Activated naive CD4-positive, alpha-beta T cell treated with anti-CD3 and anti-CD28 coated beads for 36 hours (primary cell): ENCODE measurements at regions of chr6 and their contacts with region 1.

Region 1: DNA sequence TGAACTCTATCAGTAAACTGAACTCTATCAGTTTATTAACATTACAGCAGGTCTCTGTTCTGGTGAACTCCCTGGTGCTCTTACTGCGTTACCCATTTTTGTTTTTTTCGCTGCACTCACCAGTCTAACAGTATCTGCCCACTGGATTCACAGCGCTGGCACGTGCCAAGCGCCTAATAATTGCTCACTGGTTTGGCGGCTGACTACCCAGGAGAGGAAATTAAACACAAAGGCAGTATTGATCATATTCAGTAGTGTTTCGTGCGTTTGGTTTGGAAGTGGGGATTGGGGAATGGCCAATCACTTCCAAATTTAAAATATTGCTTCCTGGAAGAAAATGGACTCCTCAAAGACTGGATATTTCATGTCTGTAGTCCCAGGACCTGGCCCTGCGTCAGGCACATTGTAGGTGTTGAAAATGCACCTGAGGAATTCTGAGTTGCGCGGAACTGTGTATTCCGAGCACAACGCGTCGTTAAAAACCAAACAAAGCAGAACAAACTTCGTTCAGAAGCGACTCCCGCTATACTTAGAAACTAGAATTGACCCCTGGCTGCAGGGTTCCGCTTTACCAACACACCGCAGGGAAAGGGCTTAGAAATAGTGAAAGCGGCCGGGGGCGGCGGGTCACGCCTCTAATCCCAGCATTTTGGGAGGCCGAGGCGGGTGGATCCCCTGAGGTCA is 1.1 kb upstream of the RPS12 start:
- DNase-seq: peak; percentile 51
- H3K4me3 Mint-ChIP-seq: peak overlapping the region; percentile 94
- H3K27ac Mint-ChIP-seq: peak overlapping the region; percentile 97
- H3K4me1 Mint-ChIP-seq: peaks cover 27% of the 10 kb centered on the region
- H3K27me3 Mint-ChIP-seq: no peaks in the 10 kb centered on the region

Region 2: DNA sequence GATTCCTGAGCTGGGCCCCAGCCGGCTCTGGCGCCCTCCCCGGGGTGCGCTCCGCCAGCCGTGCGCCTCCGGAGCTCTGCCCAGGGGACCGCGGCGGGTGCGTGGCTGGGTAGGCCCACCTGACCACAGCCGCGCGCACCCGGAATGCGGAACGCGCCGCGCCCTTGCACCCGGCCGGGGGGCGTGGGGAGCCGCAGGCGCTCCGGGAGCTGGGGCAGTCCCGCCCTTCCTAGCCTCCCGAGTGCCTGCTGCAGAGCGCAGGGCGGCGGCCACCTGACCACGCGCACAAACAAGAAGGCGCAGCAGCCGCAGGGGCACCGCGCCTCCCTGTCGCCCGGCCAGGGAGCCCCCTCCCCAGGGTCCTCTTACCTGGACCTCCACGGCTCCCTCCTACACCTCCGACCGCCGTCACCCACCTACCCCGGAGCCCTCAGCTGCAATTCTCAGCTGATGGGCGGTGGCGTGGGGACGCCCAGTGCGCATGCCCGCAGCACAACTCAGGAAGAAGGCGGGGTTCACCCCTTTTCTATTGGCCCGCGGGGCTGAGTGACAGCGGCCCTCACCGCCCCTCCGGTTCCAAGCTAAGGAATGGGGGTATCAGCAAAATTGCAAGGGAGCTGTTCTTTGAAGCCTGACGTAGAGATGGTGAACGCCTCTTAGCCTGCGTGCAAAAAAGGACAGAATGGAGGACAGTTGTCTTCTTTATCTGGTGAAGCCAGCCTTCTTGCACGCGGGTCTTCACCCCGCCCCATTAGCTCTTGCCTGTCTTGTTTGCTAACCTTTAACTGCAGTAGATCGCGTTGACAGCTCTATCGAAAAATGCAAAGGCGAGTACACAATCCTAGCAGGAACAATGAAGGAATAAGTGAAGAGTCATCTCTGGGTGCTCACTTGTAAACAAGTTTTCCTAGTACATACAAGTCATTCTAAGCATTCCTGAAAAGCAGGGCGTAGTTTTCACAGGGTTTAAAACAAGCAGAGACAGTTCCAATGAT is 300.4 kb before region 1 on chr6 and contains the start of gene STX7:
- CTCF ChIA-PET with region 1: no interaction called
- intact Hi-C with region 1: loop called (anchors 1 kb)
- DNase-seq: peak; percentile 83
- H3K4me3 Mint-ChIP-seq: peak within 1 kb of the TSS; percentile 95
- H3K27ac Mint-ChIP-seq: no peak within 1 kb of the TSS
- H3K4me1 Mint-ChIP-seq: peaks cover 26% of the 10 kb centered on the region
- H3K27me3 Mint-ChIP-seq: no peaks in the 10 kb centered on the region
- total RNA-seq, gene STX7: 11.3 to 11.7 TPM

Region 3: GRCh38 chr6:132734694-132735635 is 78.3 kb before region 1 on chr6:
- CTCF ChIA-PET with region 1: no interaction called
- intact Hi-C with region 1: loop called (anchors 2 kb)
- DNase-seq: no peak
- H3K4me3 Mint-ChIP-seq: no peak overlapping the region
- H3K27ac Mint-ChIP-seq: no peak overlapping the region
- H3K4me1 Mint-ChIP-seq: peaks cover 27% of the 10 kb centered on the region
- H3K27me3 Mint-ChIP-seq: no peaks in the 10 kb centered on the region

Region 4: DNA sequence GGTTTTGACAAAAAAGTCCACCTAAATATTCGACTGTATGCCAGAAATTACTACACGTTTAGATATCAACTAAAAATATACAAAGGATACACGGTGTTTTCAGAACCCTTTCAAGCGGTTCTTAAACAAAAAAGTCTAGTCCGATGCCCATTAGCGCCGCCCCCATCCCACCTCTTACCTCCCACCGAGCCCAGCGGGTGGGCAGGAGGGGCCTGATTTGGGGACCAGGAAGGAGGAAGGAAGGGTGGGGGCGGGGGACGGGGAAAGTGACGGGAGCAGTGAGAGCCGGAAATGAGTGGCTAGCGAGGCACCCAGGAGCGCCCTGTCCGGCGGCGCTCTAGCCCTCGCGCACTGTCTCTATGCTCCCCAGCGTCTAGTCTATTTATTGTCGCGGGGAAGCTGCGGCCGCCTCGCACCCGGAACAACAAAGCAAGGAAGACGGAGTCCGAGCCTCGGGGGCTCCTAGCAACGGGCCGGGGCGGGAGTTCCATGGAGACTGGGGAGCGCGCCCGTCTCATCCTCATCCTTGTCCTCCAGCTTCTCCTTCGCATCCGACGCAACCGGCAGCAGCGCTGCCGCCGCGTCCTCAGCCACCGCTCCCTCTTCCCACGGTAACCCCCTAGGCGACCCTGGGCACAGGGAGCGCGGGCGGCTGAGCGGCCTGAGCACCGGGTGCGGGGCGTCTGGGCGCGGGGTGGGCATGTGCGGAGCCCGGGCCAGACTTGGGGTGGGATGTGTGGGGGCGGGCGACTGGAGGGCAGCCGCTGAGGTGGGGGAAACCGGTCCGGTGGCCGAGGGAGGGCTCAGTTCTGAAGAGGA is 1139.7 kb after region 1 on chr6 and contains the start of gene TBPL1:
- CTCF ChIA-PET with region 1: no interaction called
- intact Hi-C with region 1: loop called (anchors 1 kb)
- DNase-seq: peak; percentile 92
- H3K4me3 Mint-ChIP-seq: peak within 1 kb of the TSS; percentile 87
- H3K27ac Mint-ChIP-seq: peak within 1 kb of the TSS; percentile 86
- H3K4me1 Mint-ChIP-seq: peaks cover 36% of the 10 kb centered on the region
- H3K27me3 Mint-ChIP-seq: no peaks in the 10 kb centered on the region
- total RNA-seq, gene TBPL1: 27.0 to 27.6 TPM